ENCODE measurements at regions of chr4 and their contacts with region 1.

Region 1: GRCh38 chr4:110055158-110055768 is 142.6 kb downstream of the EGF start:
- DNase-seq: peak; percentile 43
- H3K4me3 Mint-ChIP-seq: peak overlapping the region; percentile 22
- H3K27ac Mint-ChIP-seq: peak overlapping the region; percentile 55
- H3K4me1 Mint-ChIP-seq: peaks cover 62% of the 10 kb centered on the region
- H3K27me3 Mint-ChIP-seq: no peaks in the 10 kb centered on the region

Region 2: GRCh38 chr4:110020139-110020538 is 35.1 kb before region 1 on chr4:
- CTCF ChIA-PET with region 1: no interaction called
- POLR2A ChIA-PET with region 1: no interaction called
- DNase-seq: no peak
- H3K4me3 Mint-ChIP-seq: no peak overlapping the region
- H3K27ac Mint-ChIP-seq: no peak overlapping the region
- H3K4me1 Mint-ChIP-seq: no peaks in the 10 kb centered on the region
- H3K27me3 Mint-ChIP-seq: peaks cover 11% of the 10 kb centered on the region

Region 3: DNA sequence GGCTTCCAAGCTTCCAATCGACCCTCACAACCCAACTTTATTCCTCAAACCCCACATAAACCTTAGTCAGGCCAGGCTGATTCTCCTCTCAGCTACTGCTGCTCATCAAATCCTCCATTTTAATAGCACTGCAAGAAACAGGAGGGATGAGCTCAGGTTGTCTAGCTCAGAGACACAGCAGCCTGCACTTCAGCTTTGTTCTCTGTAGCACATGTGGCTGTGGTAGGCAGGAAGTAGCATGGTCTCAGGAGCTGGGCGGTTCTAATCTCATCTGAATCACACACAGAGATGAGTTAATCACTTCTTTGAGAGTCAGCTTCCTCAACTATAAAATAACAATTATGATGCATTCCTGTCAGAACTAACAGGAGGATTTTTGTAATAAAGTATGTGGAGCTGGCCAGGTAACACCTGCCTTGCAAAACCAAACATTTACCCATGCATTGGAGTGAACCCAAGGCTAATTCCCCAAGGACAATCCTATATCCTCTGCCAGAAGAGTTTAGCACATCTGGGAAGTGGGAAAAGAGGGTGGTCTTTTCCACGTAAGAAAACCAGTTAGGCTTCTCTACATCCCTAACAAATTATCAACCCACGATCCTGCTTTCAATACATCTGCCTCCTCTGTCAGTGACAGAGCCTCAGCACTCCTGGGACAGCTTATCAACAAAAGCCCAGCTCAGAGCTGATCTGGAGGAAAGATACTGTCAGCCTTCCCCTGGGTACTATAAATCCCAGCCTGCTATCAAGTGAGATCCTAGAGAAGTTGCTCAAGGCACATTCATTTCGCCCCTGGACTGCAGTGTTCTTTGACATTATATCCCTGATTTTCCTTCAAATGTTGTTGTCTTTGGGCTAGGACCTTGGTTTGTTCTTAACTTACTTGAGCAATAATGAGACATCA is 110.4 kb after region 1 on chr4:
- CTCF ChIA-PET with region 1: interaction called, 13 read pairs
- POLR2A ChIA-PET with region 1: interaction called, 53 read pairs
- DNase-seq: peak; percentile 79
- H3K4me3 Mint-ChIP-seq: peak overlapping the region; percentile 50
- H3K27ac Mint-ChIP-seq: peak overlapping the region; percentile 95
- H3K4me1 Mint-ChIP-seq: peaks cover 37% of the 10 kb centered on the region
- H3K27me3 Mint-ChIP-seq: no peaks in the 10 kb centered on the region

Region 4: GRCh38 chr4:110193822-110194761 is 138.8 kb after region 1 on chr4:
- CTCF ChIA-PET with region 1: interaction called, 10 read pairs
- POLR2A ChIA-PET with region 1: interaction called, 53 read pairs
- DNase-seq: peak; percentile 84
- H3K4me3 Mint-ChIP-seq: peak overlapping the region; percentile 34
- H3K27ac Mint-ChIP-seq: peak overlapping the region; percentile 72
- H3K4me1 Mint-ChIP-seq: peaks cover 36% of the 10 kb centered on the region
- H3K27me3 Mint-ChIP-seq: peaks cover 2% of the 10 kb centered on the region

Region 5: GRCh38 chr4:110245577-110245976 is 190.3 kb after region 1 on chr4:
- CTCF ChIA-PET with region 1: no interaction called
- POLR2A ChIA-PET with region 1: no interaction called
- DNase-seq: no peak
- H3K4me3 Mint-ChIP-seq: no peak overlapping the region
- H3K27ac Mint-ChIP-seq: no peak overlapping the region
- H3K4me1 Mint-ChIP-seq: no peaks in the 10 kb centered on the region
- H3K27me3 Mint-ChIP-seq: peaks cover 18% of the 10 kb centered on the region